Naive thymus-derived CD4-positive, alpha-beta T cell (primary cell): ENCODE measurements at regions of chr17 and their contacts with region 1.

Region 1: GRCh38 chr17:45197555-45198334 is 23.9 kb upstream of the FMNL1 start:
- DNase-seq: peak; percentile 62 to 94 (median 79)
- ATAC-seq: peak; percentile 99
- H3K4me3 ChIP-seq: no peak overlapping the region
- H3K4me3 Mint-ChIP-seq: no peak overlapping the region
- H3K27ac ChIP-seq: no peak overlapping the region
- H3K27ac Mint-ChIP-seq: no peak overlapping the region
- H3K4me1 ChIP-seq: peaks cover 0 to 5% of the 10 kb centered on the region in 2 donors
- H3K4me1 Mint-ChIP-seq: peaks cover 0 to 9% (median 3%) of the 10 kb centered on the region in 7 donors
- H3K27me3 ChIP-seq: no peaks in the 10 kb centered on the region
- H3K27me3 Mint-ChIP-seq: no peaks in the 10 kb centered on the region

Region 2: DNA sequence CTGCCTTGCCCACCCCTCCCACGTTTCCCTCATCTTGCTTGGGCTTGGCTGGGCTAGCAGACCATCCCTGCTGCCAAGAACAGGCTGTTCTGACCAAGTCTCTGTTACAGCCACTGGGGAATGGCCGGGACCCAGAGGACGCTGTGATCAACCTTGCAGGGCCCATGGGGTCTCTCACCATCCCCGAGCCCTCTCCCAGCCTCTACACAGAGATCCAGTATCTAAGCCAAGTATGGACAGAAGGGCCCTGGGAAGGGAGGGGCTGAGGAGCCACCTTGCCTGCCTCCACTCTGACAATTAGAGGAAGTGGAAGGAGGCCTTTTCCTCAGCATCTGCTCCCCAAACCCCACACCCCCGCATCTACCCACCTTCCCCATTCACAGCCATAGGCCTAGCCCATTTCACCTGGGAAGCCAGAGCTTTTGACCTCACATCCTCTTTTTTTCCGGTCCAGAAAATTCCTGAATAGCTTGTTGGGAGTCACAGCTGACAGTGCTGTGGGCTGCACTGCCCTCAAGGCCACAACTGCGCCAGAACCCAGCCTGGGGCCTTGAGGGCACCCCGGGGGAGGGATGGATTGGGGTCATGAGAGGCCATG is 1336.6 kb before region 1 on chr17:
- CTCF ChIA-PET with region 1: no interaction called
- POLR2A ChIA-PET with region 1: no interaction called
- intact Hi-C with region 1: no loop called
- DNase-seq: no peak
- ATAC-seq: no peak
- H3K4me3 ChIP-seq: no peak overlapping the region
- H3K4me3 Mint-ChIP-seq: no peak overlapping the region
- H3K27ac ChIP-seq: no peak overlapping the region
- H3K27ac Mint-ChIP-seq: no peak overlapping the region
- H3K4me1 ChIP-seq: no peaks in the 10 kb centered on the region
- H3K4me1 Mint-ChIP-seq: peaks cover 0 to 2% (median 0%) of the 10 kb centered on the region in 7 donors
- H3K27me3 ChIP-seq: no peaks in the 10 kb centered on the region
- H3K27me3 Mint-ChIP-seq: peaks cover 0 to 9% (median 0%) of the 10 kb centered on the region in 5 donors

Region 3: DNA sequence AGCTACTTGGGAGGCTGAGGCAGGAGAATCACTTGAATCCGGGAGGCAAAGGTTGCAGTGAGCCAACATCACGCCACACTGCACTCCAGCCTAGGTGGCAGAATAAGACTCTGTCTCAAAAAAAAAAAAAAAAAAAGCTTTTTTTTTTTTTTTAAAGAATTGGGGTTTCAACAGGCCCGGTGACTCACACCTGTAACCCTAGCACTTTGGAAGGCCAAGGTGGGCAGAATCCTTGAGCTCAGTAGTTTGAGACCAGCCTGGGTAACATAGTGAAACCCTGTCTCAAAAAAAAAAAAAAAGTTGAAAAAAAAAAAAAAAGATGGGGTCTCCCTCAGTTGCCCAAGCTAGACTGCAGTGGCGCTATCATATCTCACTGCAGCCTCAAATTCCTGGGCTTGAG is 42.7 kb before region 1 on chr17:
- CTCF ChIA-PET with region 1: interaction called, 86 read pairs
- POLR2A ChIA-PET with region 1: interaction called, 44 read pairs
- intact Hi-C with region 1: no loop called
- DNase-seq: no peak
- ATAC-seq: no peak
- H3K4me3 ChIP-seq: no peak overlapping the region
- H3K4me3 Mint-ChIP-seq: no peak overlapping the region
- H3K27ac ChIP-seq: peak overlapping the region; percentile 40
- H3K27ac Mint-ChIP-seq: peak overlapping the region in 2 of 9 donors; percentile 19 to 81
- H3K4me1 ChIP-seq: peaks cover 18 to 32% of the 10 kb centered on the region in 2 donors
- H3K4me1 Mint-ChIP-seq: peaks cover 30 to 62% (median 49%) of the 10 kb centered on the region in 7 donors
- H3K27me3 ChIP-seq: no peaks in the 10 kb centered on the region
- H3K27me3 Mint-ChIP-seq: no peaks in the 10 kb centered on the region

Region 4: GRCh38 chr17:45161019-45161825 is 36.5 kb before region 1 on chr17:
- CTCF ChIA-PET with region 1: interaction called, 12 read pairs
- POLR2A ChIA-PET with region 1: interaction called, 7 read pairs
- intact Hi-C with region 1: no loop called
- DNase-seq: peak; percentile 89 to 100 (median 99)
- ATAC-seq: peak; percentile 93
- H3K4me3 ChIP-seq: peak overlapping the region; percentile 95
- H3K4me3 Mint-ChIP-seq: peak overlapping the region; percentile 88 to 100 (median 96)
- H3K27ac ChIP-seq: peak overlapping the region; percentile 98
- H3K27ac Mint-ChIP-seq: peak overlapping the region; percentile 97 to 100 (median 98)
- H3K4me1 ChIP-seq: peaks cover 15 to 27% of the 10 kb centered on the region in 2 donors
- H3K4me1 Mint-ChIP-seq: peaks cover 29 to 48% (median 43%) of the 10 kb centered on the region in 7 donors
- H3K27me3 ChIP-seq: no peaks in the 10 kb centered on the region
- H3K27me3 Mint-ChIP-seq: no peaks in the 10 kb centered on the region

Region 5: GRCh38 chr17:45172454-45173286 is 25.1 kb before region 1 on chr17:
- CTCF ChIA-PET with region 1: interaction called, 13 read pairs
- POLR2A ChIA-PET with region 1: interaction called, 7 read pairs
- intact Hi-C with region 1: loop called in 1 of 2 experiments (anchors 2 kb)
- DNase-seq: peak in 8 of 9 donors; percentile 45 to 61 (median 55)
- ATAC-seq: peak; percentile 79
- H3K4me3 ChIP-seq: peak overlapping the region; percentile 65
- H3K4me3 Mint-ChIP-seq: peak overlapping the region; percentile 71 to 95 (median 86)
- H3K27ac ChIP-seq: peak overlapping the region; percentile 63
- H3K27ac Mint-ChIP-seq: peak overlapping the region; percentile 63 to 98 (median 94)
- H3K4me1 ChIP-seq: peaks cover 7 to 14% of the 10 kb centered on the region in 2 donors
- H3K4me1 Mint-ChIP-seq: peaks cover 8 to 31% (median 24%) of the 10 kb centered on the region in 7 donors
- H3K27me3 ChIP-seq: no peaks in the 10 kb centered on the region
- H3K27me3 Mint-ChIP-seq: no peaks in the 10 kb centered on the region

Region 6: GRCh38 chr17:45394913-45395568 is 197.3 kb after region 1 on chr17:
- CTCF ChIA-PET with region 1: no interaction called
- POLR2A ChIA-PET with region 1: no interaction called
- intact Hi-C with region 1: no loop called
- DNase-seq: peak in 7 of 9 donors; percentile 26 to 54 (median 44)
- ATAC-seq: peak; percentile 69
- H3K4me3 ChIP-seq: no peak overlapping the region
- H3K4me3 Mint-ChIP-seq: peak overlapping the region in 2 of 10 donors; percentile 21 to 43
- H3K27ac ChIP-seq: no peak overlapping the region
- H3K27ac Mint-ChIP-seq: peak overlapping the region in 4 of 9 donors; percentile 12 to 67 (median 52)
- H3K4me1 ChIP-seq: no peaks in the 10 kb centered on the region
- H3K4me1 Mint-ChIP-seq: peaks cover 0 to 13% (median 6%) of the 10 kb centered on the region in 7 donors
- H3K27me3 ChIP-seq: no peaks in the 10 kb centered on the region
- H3K27me3 Mint-ChIP-seq: no peaks in the 10 kb centered on the region